Mammary epithelial cell (primary cell): ENCODE measurements at regions of chr3 and their contacts with region 1.

Region 1: GRCh38 chr3:72938471-72939265 is 50.8 kb downstream of the GXYLT2 start:
- DNase-seq: peak; percentile 63
- H3K4me3 ChIP-seq: no peak overlapping the region
- H3K27ac ChIP-seq: no peak overlapping the region
- H3K4me1 ChIP-seq: peaks cover 9% of the 10 kb centered on the region
- H3K27me3 ChIP-seq: no peaks in the 10 kb centered on the region
- CTCF ChIP-seq: peak; percentile 39 to 61

Region 2: GRCh38 chr3:72887705-72888545 is 50.7 kb before region 1 on chr3 and contains the start of gene GXYLT2:
- CTCF ChIA-PET with region 1: no interaction called
- dilution Hi-C with region 1: no loop called
- in situ Hi-C with region 1: no loop called
- intact Hi-C with region 1: loop called (anchors 5 kb)
- DNase-seq: peak; percentile 64
- H3K4me3 ChIP-seq: peak within 1 kb of the TSS; percentile 46 to 55 (median 52)
- H3K27ac ChIP-seq: peak within 1 kb of the TSS; percentile 23
- H3K4me1 ChIP-seq: peaks cover 56% of the 10 kb centered on the region
- H3K27me3 ChIP-seq: no peaks in the 10 kb centered on the region
- CTCF ChIP-seq: no peak
- total RNA-seq, gene GXYLT2: 3.9 to 9.3 TPM

Region 3: DNA sequence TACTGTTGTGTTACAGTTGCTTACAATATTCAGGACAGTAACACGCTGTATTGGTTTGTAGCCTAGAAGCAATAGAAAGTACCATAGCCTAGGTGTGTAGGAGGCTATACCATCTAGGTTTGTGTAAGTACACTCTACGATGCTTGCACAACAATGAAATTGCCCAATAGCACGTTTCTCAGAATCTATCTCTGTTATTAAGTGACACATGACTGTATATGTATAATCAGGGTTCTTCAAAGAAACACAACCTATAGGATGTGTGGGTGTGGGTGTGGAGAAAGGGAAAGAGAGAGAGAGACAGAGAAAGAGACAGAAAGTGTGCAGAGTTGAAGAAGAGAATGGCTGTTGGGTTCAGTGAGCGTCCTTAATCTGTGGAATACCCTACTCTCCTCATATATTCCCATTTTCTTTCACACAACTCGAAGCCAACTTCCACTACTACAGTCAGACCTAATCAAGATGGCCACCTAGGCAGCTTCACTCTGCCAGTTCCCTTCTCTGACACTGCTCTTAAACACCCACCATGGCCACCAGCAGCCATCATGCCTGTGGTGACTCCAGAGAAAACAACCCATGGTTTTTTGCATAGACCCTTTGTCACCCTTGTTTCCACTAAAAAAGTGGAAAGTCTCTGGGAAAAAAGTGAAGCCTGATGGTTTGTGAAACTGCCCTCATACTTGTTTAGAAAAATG is 52.2 kb after region 1 on chr3:
- CTCF ChIA-PET with region 1: no interaction called
- dilution Hi-C with region 1: no loop called
- in situ Hi-C with region 1: no loop called
- intact Hi-C with region 1: no loop called
- DNase-seq: no peak
- H3K4me3 ChIP-seq: no peak overlapping the region
- H3K27ac ChIP-seq: no peak overlapping the region
- H3K4me1 ChIP-seq: no peaks in the 10 kb centered on the region
- H3K27me3 ChIP-seq: no peaks in the 10 kb centered on the region
- CTCF ChIP-seq: no peak

Region 4: DNA sequence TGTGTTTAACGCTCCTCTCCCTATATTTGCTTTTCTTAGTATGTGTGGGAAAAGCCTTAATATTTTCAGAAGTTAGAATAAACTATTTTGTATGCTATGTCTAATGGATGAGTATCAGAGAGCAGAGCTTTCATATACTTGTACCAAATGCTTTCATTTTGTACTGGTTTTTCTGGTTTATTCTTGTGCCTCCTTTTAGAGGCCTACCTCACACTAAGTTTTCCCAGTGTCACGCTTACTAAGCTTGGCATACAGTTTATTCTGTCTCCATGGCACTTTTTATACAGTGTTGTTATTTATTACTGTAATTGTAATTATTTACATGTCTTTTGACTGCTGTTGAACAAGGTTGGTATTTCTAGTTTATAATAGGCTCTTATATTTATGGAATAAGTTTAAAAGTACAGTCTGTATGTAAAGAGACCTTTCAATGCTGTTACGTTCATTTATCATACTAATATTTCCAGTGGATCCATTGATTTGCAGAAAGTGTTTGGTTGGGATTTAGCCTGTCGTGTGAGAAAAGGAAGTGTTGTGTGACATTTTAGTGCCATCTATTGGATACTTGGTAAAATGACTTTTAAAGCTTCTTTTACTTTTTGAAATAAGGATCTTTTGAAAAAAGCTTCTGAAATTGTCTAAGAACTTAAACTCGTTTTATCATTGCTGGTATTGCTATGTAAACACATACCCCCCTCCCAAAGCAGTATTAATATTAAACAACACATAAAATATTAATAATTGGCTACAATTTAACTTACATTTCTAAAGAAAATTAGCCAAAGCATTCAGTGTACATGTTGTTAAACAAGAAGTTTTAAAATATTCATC is 117.6 kb after region 1 on chr3:
- CTCF ChIA-PET with region 1: interaction called, 6 read pairs
- dilution Hi-C with region 1: no loop called
- in situ Hi-C with region 1: loop called in 1 of 2 experiments (anchors 10 kb)
- intact Hi-C with region 1: loop called (anchors 1 kb)
- DNase-seq: peak; percentile 19
- H3K4me3 ChIP-seq: no peak overlapping the region
- H3K27ac ChIP-seq: peak overlapping the region; percentile 57
- H3K4me1 ChIP-seq: no peaks in the 10 kb centered on the region
- H3K27me3 ChIP-seq: no peaks in the 10 kb centered on the region
- CTCF ChIP-seq: peak; percentile 46 to 48

Region 5: GRCh38 chr3:73292220-73292619 is 353.6 kb after region 1 on chr3:
- CTCF ChIA-PET with region 1: no interaction called
- dilution Hi-C with region 1: no loop called
- in situ Hi-C with region 1: no loop called
- intact Hi-C with region 1: no loop called
- DNase-seq: no peak
- H3K4me3 ChIP-seq: no peak overlapping the region
- H3K27ac ChIP-seq: no peak overlapping the region
- H3K4me1 ChIP-seq: no peaks in the 10 kb centered on the region
- H3K27me3 ChIP-seq: peaks cover 6% of the 10 kb centered on the region
- CTCF ChIP-seq: no peak